ENCODE measurements at regions of chr15 and their contacts with region 1.

Region 1: GRCh38 chr15:65384895-65385858 is 7.4 kb upstream of the IGDCC3 start:
- DNase-seq: peak; percentile 94
- CTCF ChIP-seq: peak; percentile 94

Region 2: DNA sequence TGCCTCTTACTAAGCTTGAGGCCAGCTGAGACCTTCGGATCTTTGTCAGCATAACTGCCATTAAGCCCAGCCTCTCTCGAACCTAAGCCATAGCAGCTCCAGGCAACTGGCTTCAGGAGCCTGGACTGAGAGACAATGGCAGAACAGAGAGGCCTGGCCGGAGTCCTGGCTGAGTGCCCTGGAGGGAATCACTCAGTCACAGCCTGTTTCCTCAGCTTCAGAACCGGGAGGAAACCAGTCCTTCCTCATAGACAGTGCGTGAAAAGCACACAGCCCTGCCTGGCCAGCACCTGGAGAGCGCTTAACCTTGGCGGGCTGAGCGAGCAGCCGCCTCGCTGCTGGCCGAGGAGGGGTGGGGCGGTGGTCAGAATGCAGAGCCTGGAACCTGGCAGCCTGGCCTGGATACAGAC is 59.1 kb before region 1 on chr15:
- CTCF ChIA-PET with region 1: interaction called, 203 read pairs
- POLR2A ChIA-PET with region 1: no interaction called
- DNase-seq: no peak
- CTCF ChIP-seq: no peak

Region 3: GRCh38 chr15:65349338-65349737 is 35.8 kb before region 1 on chr15:
- CTCF ChIA-PET with region 1: interaction called, 13 read pairs
- POLR2A ChIA-PET with region 1: no interaction called
- DNase-seq: no peak
- CTCF ChIP-seq: no peak

Region 4: DNA sequence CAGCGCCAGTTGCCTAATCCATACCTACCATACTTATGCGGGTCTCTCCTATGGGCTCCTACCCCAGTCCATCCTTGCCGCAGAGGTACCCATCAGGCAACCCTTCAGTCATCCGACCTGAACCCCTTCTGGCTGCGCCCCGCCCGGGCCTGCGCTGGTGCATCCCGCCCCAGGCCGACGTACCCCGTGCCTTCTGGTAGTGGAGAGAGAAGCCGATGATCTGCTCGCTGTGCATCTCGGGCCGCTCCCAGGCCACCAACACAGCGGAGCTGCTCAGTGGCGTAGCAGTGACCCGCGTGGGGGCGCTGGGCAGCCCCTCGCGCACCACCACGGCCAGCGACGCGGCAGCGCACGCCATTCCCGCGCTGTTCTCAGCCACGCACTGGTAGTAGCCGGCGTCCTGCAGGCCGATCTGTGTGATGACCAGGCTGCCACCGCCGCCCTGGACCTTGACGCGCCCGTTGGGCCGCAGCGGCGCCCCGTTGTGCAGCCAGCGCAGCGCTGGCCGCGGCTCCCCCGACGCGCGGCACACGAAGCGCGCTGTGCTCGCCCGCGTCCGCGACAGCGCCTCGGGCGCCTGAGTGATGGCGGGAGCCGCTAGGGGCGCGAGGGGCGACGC is 10.5 kb after region 1 on chr15:
- CTCF ChIA-PET with region 1: interaction called, 96 read pairs
- POLR2A ChIA-PET with region 1: no interaction called
- DNase-seq: no peak
- CTCF ChIP-seq: no peak

Region 5: GRCh38 chr15:65409036-65409631 is 24.0 kb after region 1 on chr15:
- CTCF ChIA-PET with region 1: interaction called, 12 read pairs
- POLR2A ChIA-PET with region 1: no interaction called
- DNase-seq: peak; percentile 57
- CTCF ChIP-seq: no peak

Region 6: GRCh38 chr15:65580287-65580686 is 195.1 kb after region 1 on chr15:
- CTCF ChIA-PET with region 1: no interaction called
- POLR2A ChIA-PET with region 1: no interaction called
- DNase-seq: no peak
- CTCF ChIP-seq: no peak

Region 7: DNA sequence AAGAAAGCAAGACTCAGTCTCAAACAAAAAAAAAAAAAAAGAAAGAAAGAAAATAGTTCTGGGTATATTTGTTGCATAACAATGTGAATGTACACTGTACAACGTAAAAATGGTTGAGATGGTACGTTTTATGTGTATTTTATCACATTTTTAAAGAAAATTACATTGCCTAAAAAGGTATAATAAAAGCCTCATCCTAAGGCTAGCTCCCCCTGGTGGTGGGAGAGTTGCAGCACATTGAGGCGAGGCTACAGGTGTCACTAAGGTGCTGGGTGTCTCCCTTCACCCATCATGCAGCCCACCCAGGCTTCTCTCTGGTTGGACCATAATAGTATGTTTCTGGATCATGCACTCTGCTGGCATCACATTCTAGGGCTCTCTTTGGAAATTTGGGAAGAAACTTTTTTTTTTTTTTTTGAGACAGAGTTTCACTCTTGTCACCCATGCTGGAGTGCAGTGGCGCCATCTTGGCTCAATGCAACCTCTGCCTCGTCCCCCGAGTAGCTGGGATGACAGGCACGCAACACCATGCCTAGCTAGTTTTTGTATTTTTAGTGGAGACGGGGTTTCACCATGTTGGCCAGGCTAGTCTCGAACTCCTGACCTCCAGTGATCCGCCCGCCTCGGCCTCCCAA is 471.8 kb after region 1 on chr15:
- CTCF ChIA-PET with region 1: no interaction called
- POLR2A ChIA-PET with region 1: no interaction called
- DNase-seq: peak; percentile 52
- CTCF ChIP-seq: peak; percentile 74